Caco-2 (cell line): ENCODE measurements at regions of chr3 and their contacts with region 1.

Region 1: DNA sequence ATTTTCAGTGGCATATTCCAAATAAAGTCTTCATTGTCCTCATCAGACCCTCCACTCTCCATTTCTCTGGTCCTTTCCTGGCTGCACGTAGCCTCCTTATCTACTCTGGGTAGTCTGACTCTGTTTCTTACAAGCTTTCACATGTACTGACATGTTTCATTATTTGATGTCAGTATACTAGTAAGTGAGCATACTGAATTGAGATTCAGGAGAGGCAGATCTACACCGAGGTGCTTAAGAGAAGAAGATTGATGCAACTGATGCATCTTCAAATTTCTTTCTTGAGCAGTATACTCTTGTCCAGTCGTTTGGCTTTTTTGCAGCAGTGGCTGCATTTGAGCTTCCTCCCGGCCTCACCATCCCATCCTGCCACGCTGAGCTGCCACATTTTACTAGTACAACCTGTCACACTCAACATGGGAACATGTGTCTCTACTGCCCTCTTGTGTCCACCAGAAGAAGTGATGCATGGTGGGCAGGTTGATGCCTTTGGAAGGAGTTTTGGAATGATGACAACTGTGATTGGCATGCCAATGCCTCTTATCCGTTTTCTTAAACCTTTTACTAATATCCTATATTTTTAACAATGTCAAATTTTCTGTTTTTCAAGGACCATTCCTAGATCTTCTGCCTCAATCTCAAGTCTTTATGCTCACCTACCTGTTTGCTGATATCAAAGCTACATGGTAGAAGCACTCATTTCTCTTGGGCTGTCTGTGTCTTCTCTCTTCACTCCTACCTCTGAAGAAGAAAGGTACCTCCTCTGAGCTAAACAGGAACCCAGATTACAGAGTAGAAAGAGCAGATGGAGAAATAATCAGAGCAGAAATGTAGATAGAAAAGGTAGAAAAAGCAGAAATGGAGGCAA is 38.7 kb downstream of the GUCA1C start:
- DNase-seq: peak; percentile 59 to 67
- H3K4me3 ChIP-seq: no peak overlapping the region
- H3K4me3 Mint-ChIP-seq: no peak overlapping the region
- H3K27ac Mint-ChIP-seq: no peak overlapping the region
- H3K4me1 ChIP-seq: no peaks in the 10 kb centered on the region
- H3K4me1 Mint-ChIP-seq: peaks cover 6% of the 10 kb centered on the region
- H3K27me3 ChIP-seq: no peaks in the 10 kb centered on the region
- H3K27me3 Mint-ChIP-seq: no peaks in the 10 kb centered on the region
- CTCF ChIP-seq: peak; percentile 84 to 85

Region 2: GRCh38 chr3:108818404-108818803 is 96.6 kb before region 1 on chr3:
- CTCF ChIA-PET with region 1: interaction called, 3 read pairs
- POLR2A ChIA-PET with region 1: no interaction called
- intact Hi-C with region 1: loop called (anchors 1 kb)
- DNase-seq: peak; percentile 56 to 61
- H3K4me3 ChIP-seq: no peak overlapping the region
- H3K4me3 Mint-ChIP-seq: no peak overlapping the region
- H3K27ac Mint-ChIP-seq: no peak overlapping the region
- H3K4me1 ChIP-seq: no peaks in the 10 kb centered on the region
- H3K4me1 Mint-ChIP-seq: no peaks in the 10 kb centered on the region
- H3K27me3 ChIP-seq: no peaks in the 10 kb centered on the region
- H3K27me3 Mint-ChIP-seq: no peaks in the 10 kb centered on the region
- CTCF ChIP-seq: peak; percentile 17 to 68

Region 3: DNA sequence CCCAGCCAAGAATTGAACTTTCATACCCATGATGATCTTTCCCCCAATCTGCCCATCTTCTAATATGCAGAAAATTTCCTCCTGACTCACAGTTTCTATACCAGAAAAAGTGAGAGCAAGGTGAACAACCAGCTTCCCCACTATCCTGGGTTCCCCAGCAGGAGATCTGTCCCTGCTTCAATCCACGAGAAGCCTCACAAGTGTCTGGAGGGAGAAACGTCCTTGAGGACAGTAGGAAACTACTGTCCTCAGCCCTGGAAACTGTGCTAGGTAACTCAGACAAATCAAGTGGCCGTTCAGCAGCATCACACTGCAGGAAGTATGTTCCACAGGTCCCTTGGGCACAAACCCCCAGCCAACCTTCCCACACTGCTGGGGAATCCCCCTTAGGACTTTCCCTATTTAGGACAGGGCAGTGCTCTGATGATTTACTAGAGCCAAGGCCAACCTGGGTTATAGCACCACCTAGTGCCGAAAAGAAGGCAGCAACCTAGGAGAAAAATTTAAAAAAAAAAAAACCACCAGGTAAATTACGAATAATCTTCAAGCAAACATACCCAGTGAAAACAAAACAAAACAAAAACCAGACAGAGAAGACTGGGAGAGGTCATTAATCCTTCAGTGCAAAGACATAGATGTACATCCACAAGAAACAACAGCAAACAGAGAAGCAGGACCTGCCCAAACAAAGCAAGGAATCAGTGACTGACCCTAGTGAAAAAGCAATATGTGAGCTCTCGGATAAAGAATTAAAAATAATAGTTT is 166.9 kb after region 1 on chr3:
- CTCF ChIA-PET with region 1: no interaction called
- POLR2A ChIA-PET with region 1: no interaction called
- intact Hi-C with region 1: loop called (anchors 5 kb)
- DNase-seq: peak; percentile 36 to 47
- H3K4me3 ChIP-seq: no peak overlapping the region
- H3K4me3 Mint-ChIP-seq: no peak overlapping the region
- H3K27ac Mint-ChIP-seq: no peak overlapping the region
- H3K4me1 ChIP-seq: no peaks in the 10 kb centered on the region
- H3K4me1 Mint-ChIP-seq: no peaks in the 10 kb centered on the region
- H3K27me3 ChIP-seq: no peaks in the 10 kb centered on the region
- H3K27me3 Mint-ChIP-seq: peaks cover 19% of the 10 kb centered on the region
- CTCF ChIP-seq: peak; percentile 67 to 69

Region 4: DNA sequence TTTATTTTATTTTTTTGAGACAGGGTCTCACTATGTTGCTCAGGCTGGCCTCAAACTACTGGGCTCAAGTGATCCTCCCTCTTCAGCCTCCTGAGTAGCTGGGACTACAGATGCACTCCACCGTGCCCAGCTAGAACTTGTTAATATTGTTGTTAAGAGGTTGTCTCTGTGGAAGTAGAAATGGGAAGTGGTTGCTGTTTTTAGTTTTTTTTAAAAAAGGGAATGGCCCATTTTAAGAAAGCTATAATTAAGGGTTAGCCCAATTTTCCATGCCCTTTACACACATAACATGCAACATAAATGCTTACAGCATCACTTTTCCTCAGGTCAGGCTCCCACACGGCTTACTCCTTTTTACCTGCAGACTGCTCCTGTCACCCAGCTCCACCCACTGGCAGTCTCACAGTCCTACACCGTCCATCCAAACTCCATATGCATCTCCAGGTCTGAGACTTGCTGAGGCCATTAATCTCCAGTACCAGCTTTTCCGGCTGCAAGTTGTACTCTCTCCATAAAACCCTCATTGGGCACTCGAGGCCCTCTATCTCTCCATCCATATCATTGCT is 183.2 kb after region 1 on chr3:
- CTCF ChIA-PET with region 1: interaction called, 14 read pairs
- POLR2A ChIA-PET with region 1: no interaction called
- intact Hi-C with region 1: no loop called
- DNase-seq: peak; percentile 49 to 57
- H3K4me3 ChIP-seq: no peak overlapping the region
- H3K4me3 Mint-ChIP-seq: no peak overlapping the region
- H3K27ac Mint-ChIP-seq: no peak overlapping the region
- H3K4me1 ChIP-seq: no peaks in the 10 kb centered on the region; the same call in 1 of the 2 replicates
- H3K4me1 Mint-ChIP-seq: no peaks in the 10 kb centered on the region
- H3K27me3 ChIP-seq: no peaks in the 10 kb centered on the region
- H3K27me3 Mint-ChIP-seq: no peaks in the 10 kb centered on the region
- CTCF ChIP-seq: peak; percentile 27 to 63

Region 5: GRCh38 chr3:109132801-109133473 is 217.9 kb after region 1 on chr3:
- CTCF ChIA-PET with region 1: no interaction called
- POLR2A ChIA-PET with region 1: no interaction called
- intact Hi-C with region 1: no loop called
- DNase-seq: no peak
- H3K4me3 ChIP-seq: no peak overlapping the region
- H3K4me3 Mint-ChIP-seq: no peak overlapping the region
- H3K27ac Mint-ChIP-seq: no peak overlapping the region
- H3K4me1 ChIP-seq: peaks cover 9% of the 10 kb centered on the region
- H3K4me1 Mint-ChIP-seq: peaks cover 16% of the 10 kb centered on the region
- H3K27me3 ChIP-seq: no peaks in the 10 kb centered on the region
- H3K27me3 Mint-ChIP-seq: no peaks in the 10 kb centered on the region
- CTCF ChIP-seq: no peak